Mucosa of descending colon (tissue), 3 donors: ENCODE measurements at regions of chr7 and their contacts with region 1.

Region 1: DNA sequence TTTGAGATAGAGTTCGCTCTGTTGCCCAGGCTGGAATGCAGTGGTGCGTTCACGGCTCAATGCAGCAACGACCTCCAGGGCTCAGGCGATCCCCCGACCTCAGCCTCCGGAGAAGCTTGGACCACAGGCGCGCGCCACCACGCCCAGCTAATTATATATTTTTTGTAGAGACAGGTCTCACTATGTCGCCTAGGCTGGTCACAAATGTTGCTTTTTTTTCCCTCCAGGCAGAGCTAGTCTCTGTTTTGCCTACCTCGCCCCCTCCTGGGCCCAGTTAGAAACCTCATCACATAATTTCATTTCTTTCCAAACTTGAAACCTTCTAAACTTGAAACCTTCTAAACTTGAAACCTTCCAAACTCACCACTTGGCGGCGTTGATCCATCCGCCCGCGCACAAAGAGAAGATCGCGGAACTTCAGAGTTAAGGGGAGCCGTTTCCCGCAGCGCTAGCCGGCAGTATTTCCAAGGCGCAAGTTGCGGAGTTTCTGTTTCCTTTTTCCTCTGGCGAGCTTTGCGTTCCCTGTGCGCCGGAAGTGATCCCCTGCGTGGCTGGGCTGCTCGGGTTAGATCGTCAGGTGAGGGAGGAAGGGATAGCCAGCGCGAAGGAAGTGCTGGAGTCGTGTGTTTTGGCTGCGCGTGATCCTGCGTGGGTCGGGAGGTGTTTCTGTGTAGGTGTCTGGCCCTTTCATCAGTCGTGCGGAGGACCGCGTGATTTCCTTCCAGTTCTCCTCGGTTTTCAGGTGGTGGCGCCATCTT is at the start of gene SSBP1:
- DNase-seq: peak; percentile 92
- ATAC-seq: peak; percentile 97
- H3K4me3 ChIP-seq: peak within 1 kb of the TSS; percentile 39
- H3K4me1 ChIP-seq: peaks cover 7% of the 10 kb centered on the region
- CTCF ChIP-seq: peak; percentile 28
- total RNA-seq, gene SSBP1: 67.3 to 96.4 (median 81.6) TPM

Region 2: GRCh38 chr7:141654551-141654950 is 83.5 kb before region 1 on chr7:
- intact Hi-C with region 1: loop called in 1 of 2 experiments (anchors 2 kb)
- DNase-seq: peak in 2 of 3 donors; percentile 44 to 88
- ATAC-seq: peak; percentile 93
- H3K4me3 ChIP-seq: no peak overlapping the region
- H3K4me1 ChIP-seq: no peaks in the 10 kb centered on the region
- CTCF ChIP-seq: peak; percentile 38

Region 3: DNA sequence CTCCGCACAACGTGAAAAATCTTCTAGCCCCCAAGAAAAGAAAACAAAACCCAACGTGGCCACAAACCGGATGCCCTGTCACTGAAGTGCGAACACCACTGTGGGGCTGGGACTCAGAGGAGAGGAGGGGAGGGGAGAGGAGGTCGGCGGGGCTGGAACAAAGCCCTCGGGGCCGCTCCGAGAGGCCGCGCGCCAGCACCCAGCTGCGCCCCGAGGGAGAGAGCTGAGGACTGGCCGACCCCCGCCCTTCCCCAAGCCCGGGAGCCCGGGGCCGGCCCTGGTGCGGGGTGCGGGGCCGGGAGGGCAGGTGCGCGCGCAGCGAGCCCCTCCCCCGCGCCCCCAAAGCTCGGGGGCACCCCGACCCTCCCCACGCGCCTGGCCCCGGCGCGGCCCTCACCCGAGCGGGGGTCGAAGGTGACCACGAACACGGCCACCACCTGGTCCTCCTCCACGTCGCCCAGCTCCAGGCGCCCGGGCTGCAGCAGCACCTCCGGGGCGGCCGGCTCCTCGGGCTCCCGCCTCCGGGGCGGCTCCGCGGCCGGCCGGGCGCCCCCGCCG is 36.4 kb before region 1 on chr7:
- intact Hi-C with region 1: loop called in 1 of 2 experiments (anchors 5 kb)
- DNase-seq: peak; percentile 59 to 72 (median 66)
- ATAC-seq: peak; percentile 73
- H3K4me3 ChIP-seq: peak overlapping the region; percentile 77
- H3K4me1 ChIP-seq: peaks cover 28% of the 10 kb centered on the region
- CTCF ChIP-seq: no peak